ENCODE measurements at regions of chr10 and their contacts with region 1.

Region 1: GRCh38 chr10:69957886-69958555 is 94.6 kb upstream of the MACROH2A2 start:
- DNase-seq: no peak
- H3K4me3 ChIP-seq: no peak overlapping the region
- H3K27me3 ChIP-seq: no peaks in the 10 kb centered on the region; the same call in 1 of the 2 replicates
- CTCF ChIP-seq: peak; percentile 91

Region 2: GRCh38 chr10:69639291-69640195 is 318.5 kb before region 1 on chr10:
- CTCF ChIA-PET with region 1: interaction called, 13 read pairs
- POLR2A ChIA-PET with region 1: no interaction called
- DNase-seq: no peak
- H3K4me3 ChIP-seq: no peak overlapping the region
- H3K27me3 ChIP-seq: peaks cover 2% of the 10 kb centered on the region
- CTCF ChIP-seq: peak; percentile 83

Region 3: DNA sequence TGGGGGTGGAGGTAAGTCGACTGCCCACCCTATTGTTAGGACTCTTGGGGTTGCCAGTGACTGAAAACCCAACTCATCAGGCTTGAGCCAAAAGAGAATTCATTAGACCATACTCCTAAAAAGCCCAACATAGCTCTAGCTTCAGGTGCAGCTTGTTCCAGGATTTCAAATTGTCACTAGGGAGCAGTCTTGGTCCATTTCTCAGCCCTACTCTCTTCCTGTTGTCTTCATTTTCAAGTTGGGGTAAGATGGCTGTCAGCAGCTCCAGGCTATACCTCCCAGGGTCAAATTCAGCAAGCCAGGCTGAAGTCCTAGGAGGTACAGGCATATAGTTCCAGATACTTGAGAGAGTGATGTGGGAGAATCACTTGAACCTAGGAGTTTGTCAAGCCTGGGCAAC is 171.2 kb before region 1 on chr10:
- CTCF ChIA-PET with region 1: interaction called, 51 read pairs
- POLR2A ChIA-PET with region 1: no interaction called
- DNase-seq: no peak
- H3K4me3 ChIP-seq: no peak overlapping the region
- H3K27me3 ChIP-seq: peaks cover 11% of the 10 kb centered on the region
- CTCF ChIP-seq: peak; percentile 54

Region 4: DNA sequence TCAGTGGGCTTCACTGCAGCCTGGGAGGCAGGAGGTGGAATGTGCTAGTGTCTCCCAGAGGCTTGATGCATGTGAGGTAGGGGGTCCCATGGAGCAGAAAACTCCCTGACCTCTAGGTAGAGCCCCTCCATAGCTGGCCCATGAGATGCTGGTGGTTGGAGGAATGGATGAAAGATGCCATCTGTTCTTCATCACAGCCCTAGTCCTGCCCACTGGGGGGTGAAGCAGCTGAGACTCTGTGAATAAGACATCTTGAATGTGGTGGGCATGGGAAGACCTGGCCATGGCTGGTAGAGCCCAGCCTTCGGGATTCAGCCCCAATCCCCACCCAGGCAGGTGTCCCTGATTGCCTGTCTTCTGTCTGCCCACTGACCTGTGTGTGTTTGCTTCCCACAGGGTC is 63.9 kb before region 1 on chr10:
- CTCF ChIA-PET with region 1: no interaction called
- POLR2A ChIA-PET with region 1: no interaction called
- DNase-seq: no peak
- H3K4me3 ChIP-seq: no peak overlapping the region
- H3K27me3 ChIP-seq: no peaks in the 10 kb centered on the region
- CTCF ChIP-seq: no peak

Region 5: GRCh38 chr10:69936091-69936490 is 21.9 kb before region 1 on chr10:
- CTCF ChIA-PET with region 1: interaction called, 17 read pairs
- POLR2A ChIA-PET with region 1: no interaction called
- DNase-seq: no peak
- H3K4me3 ChIP-seq: no peak overlapping the region
- H3K27me3 ChIP-seq: no peaks in the 10 kb centered on the region
- CTCF ChIP-seq: peak; percentile 40

Region 6: GRCh38 chr10:69968830-69969229 is 10.8 kb after region 1 on chr10:
- CTCF ChIA-PET with region 1: interaction called, 33 read pairs
- POLR2A ChIA-PET with region 1: no interaction called
- DNase-seq: no peak
- H3K4me3 ChIP-seq: no peak overlapping the region
- H3K27me3 ChIP-seq: peaks cover 15% of the 10 kb centered on the region
- CTCF ChIP-seq: peak; percentile 36